ENCODE measurements at regions of chr6 and their contacts with region 1.

Region 1: DNA sequence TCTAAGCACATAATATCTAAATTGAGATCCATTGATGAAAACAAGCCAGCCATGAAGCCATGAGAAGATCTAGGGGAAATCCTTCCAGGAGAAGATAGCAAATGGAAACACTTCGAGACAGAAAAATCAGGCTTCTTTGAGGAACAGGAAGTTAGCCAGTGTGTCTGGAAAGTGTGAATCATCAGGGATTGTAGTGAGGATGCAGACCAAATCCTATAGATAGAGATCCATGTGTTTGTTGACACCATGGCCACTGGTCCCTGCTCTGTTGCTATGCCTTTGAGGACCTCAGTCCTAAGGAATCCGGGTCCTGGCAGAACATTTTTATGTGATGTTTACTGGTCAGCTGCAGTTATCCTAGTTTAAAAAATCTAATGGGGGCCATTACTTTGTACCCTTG is 6.6 kb upstream of the ELOVL2 start:
- DNase-seq: peak; percentile 37

Region 2: GRCh38 chr6:10478187-10479040 is 572.3 kb before region 1 on chr6:
- in situ Hi-C with region 1: loop called (anchors 25 kb)
- DNase-seq: peak; percentile 82

Region 3: GRCh38 chr6:11251541-11252360 is 201.0 kb after region 1 on chr6:
- in situ Hi-C with region 1: no loop called
- DNase-seq: no peak